ENCODE measurements at regions of chr6 and their contacts with region 1.

Region 1: GRCh38 chr6:27157459-27158315 is 89.8 kb upstream of the PRSS16 start:
- DNase-seq: peak; percentile 94
- H3K4me3 Mint-ChIP-seq: peak overlapping the region; percentile 76
- H3K27ac Mint-ChIP-seq: peak overlapping the region; percentile 83
- H3K4me1 Mint-ChIP-seq: peaks cover 43% of the 10 kb centered on the region
- H3K27me3 Mint-ChIP-seq: no peaks in the 10 kb centered on the region

Region 2: GRCh38 chr6:26312501-26313390 is 844.9 kb before region 1 on chr6:
- CTCF ChIA-PET with region 1: no interaction called
- intact Hi-C with region 1: loop called (anchors 10 kb)
- DNase-seq: peak; percentile 95
- H3K4me3 Mint-ChIP-seq: peak overlapping the region; percentile 81
- H3K27ac Mint-ChIP-seq: peak overlapping the region; percentile 83
- H3K4me1 Mint-ChIP-seq: peaks cover 28% of the 10 kb centered on the region
- H3K27me3 Mint-ChIP-seq: no peaks in the 10 kb centered on the region

Region 3: DNA sequence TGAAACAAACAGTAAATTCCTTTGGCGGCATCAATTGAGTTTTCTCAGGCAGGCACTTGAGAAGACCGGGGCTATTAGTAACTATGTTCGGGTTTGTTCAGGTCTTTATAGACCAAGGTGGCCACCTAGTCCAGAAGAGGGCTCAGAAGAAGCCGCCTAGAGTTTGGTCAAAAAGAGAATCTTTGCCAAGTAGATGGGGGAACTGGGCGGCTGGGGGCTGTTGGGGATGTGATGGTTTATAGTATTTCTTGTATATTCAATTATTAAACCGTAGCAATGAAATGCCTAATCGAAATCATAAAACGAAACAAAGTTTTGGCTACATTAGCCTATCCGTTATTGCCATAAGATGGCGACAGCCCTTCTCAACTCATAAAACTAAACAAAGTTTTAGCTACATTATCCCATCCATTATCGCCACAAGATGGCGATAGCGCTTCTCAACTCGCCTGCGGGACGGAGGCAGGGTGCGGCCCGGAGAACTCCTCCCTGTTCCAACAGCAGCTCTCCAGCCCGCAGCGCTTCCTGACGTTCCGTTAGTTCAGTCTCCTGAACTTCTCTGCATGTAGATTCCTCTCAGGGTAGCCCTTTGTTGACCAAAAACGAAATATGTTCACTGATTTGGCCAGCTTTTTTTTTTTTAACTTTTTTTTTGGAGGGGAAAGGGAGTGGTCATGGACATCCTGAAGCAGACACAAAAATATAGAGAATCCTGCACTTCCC is 30.7 kb before region 1 on chr6:
- CTCF ChIA-PET with region 1: interaction called, 7 read pairs
- intact Hi-C with region 1: loop called (anchors 1 kb)
- DNase-seq: peak; percentile 92
- H3K4me3 Mint-ChIP-seq: peak overlapping the region; percentile 56
- H3K27ac Mint-ChIP-seq: peak overlapping the region; percentile 69
- H3K4me1 Mint-ChIP-seq: peaks cover 13% of the 10 kb centered on the region
- H3K27me3 Mint-ChIP-seq: no peaks in the 10 kb centered on the region

Region 4: GRCh38 chr6:27177485-27178406 is 20.1 kb after region 1 on chr6:
- CTCF ChIA-PET with region 1: interaction called, 14 read pairs
- intact Hi-C with region 1: loop called (anchors 1 kb)
- DNase-seq: peak; percentile 83
- H3K4me3 Mint-ChIP-seq: peak overlapping the region; percentile 92
- H3K27ac Mint-ChIP-seq: peak overlapping the region; percentile 87
- H3K4me1 Mint-ChIP-seq: peaks cover 4% of the 10 kb centered on the region
- H3K27me3 Mint-ChIP-seq: peaks cover 6% of the 10 kb centered on the region

Region 5: GRCh38 chr6:27312146-27312949 is 154.7 kb after region 1 on chr6 and contains the start of gene POM121L2:
- CTCF ChIA-PET with region 1: no interaction called
- intact Hi-C with region 1: loop called (anchors 5 kb)
- DNase-seq: peak; percentile 79
- H3K4me3 Mint-ChIP-seq: peak within 1 kb of the TSS; percentile 72
- H3K27ac Mint-ChIP-seq: no peak within 1 kb of the TSS
- H3K4me1 Mint-ChIP-seq: peaks cover 10% of the 10 kb centered on the region
- H3K27me3 Mint-ChIP-seq: peaks cover 62% of the 10 kb centered on the region
- total RNA-seq, gene POM121L2: not detected

Region 6: DNA sequence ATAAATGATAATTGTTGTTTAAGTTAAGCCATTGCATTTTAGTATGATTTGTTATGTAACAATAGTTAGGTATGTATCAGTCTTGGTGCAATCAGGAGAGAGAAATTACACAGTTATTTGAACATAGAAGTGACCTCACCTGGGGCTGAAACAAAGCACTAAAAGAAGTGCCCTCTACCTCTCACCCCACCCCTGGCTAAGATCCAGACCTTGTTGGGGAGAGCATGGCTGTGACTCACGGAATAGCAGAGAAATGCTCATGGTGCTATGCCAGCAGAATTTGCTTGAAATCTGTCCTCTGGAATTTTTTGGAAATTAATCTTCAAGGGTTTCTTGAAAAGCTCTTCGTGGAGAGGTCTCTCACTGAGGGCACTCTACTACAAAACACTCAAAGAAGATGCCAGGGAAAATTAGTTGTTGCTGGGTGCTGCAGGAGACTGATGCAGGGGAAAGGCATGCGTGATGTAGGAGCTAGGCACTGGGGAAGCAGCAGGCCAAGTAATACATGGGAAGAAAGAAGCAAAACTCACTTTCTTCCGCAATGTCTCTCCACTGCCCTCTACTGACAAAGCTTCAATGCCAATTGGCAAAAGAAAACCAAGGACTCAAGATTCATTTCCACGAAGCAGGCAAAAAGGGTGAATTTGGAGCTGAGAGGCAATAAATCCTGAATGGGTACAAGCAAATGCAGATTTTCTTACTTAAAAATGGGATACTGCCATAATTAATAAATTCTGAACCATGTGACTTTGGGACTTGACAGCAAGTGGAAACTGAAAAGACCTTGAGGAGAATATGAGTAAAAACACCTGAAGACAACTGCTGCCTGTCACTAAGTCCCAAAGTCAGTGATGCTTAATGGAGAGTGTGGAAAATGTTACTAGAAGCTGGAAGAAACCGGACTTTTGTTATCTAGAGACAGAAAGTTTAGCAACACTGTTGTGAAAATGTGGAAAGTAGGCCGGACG is 451.5 kb after region 1 on chr6:
- CTCF ChIA-PET with region 1: no interaction called
- intact Hi-C with region 1: loop called (anchors 2 kb)
- DNase-seq: peak; percentile 30
- H3K4me3 Mint-ChIP-seq: no peak overlapping the region
- H3K27ac Mint-ChIP-seq: no peak overlapping the region
- H3K4me1 Mint-ChIP-seq: peaks cover 13% of the 10 kb centered on the region
- H3K27me3 Mint-ChIP-seq: peaks cover 51% of the 10 kb centered on the region

Measured in activated naive CD4-positive, alpha-beta T cell treated with anti-CD3 and anti-CD28 coated beads for 36 hours (primary cell).